Left ventricle myocardium inferior (tissue), 1 donor: ENCODE measurements at regions of chr10 and their contacts with region 1.

Region 1: GRCh38 chr10:123967396-123968243 is 76.0 kb upstream of the CPXM2 start:
- DNase-seq: peak; percentile 58
- H3K4me3 ChIP-seq: no peak overlapping the region
- H3K27ac ChIP-seq: no peak overlapping the region
- H3K4me1 ChIP-seq: peaks cover 1% of the 10 kb centered on the region
- H3K27me3 ChIP-seq: peaks cover 99% of the 10 kb centered on the region
- CTCF ChIP-seq: peak; percentile 86

Region 2: DNA sequence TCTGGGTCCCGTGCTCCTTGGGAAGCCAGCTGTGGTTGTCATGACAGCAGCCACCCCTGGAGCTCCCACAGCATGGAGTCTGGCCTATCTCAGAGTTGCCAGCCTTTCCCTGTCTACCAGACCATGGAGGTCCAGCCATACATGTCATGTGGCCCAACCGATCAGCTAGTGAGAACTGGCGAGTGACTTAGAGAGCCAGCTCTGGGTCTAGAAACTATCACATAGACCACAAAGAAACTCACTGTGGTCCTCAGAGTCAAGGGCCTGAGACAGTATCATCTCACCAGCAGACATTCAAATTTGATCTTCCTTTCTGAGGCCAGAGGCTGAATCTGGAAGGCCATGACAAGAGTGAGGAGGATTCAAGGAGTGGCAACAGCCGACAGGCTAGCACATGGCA is 524.7 kb before region 1 on chr10:
- intact Hi-C with region 1: no loop called
- DNase-seq: no peak
- H3K4me3 ChIP-seq: no peak overlapping the region
- H3K27ac ChIP-seq: no peak overlapping the region
- H3K4me1 ChIP-seq: no peaks in the 10 kb centered on the region
- H3K27me3 ChIP-seq: peaks cover 29% of the 10 kb centered on the region
- CTCF ChIP-seq: no peak

Region 3: GRCh38 chr10:123582084-123582989 is 385.3 kb before region 1 on chr10:
- intact Hi-C with region 1: loop called (anchors 2 kb)
- DNase-seq: peak; percentile 67
- H3K4me3 ChIP-seq: no peak overlapping the region
- H3K27ac ChIP-seq: no peak overlapping the region
- H3K4me1 ChIP-seq: no peaks in the 10 kb centered on the region
- H3K27me3 ChIP-seq: peaks cover 94% of the 10 kb centered on the region
- CTCF ChIP-seq: peak; percentile 87